Pancreas (tissue), 10 donors: ENCODE measurements at regions of chr3 and their contacts with region 1.

Region 1: GRCh38 chr3:46629551-46630517 is 17.5 kb downstream of the FAM240A start:
- DNase-seq: peak; percentile 72 to 94 (median 84)
- ATAC-seq: peak; percentile 98 to 100 (median 99)
- H3K4me3 ChIP-seq: peak overlapping the region in 1 of 4 donors; percentile 20
- H3K27ac ChIP-seq: peak overlapping the region in 2 of 4 donors; percentile 33 to 43
- H3K4me1 ChIP-seq: peaks cover 0 to 3% (median 0%) of the 10 kb centered on the region in 3 donors
- H3K27me3 ChIP-seq: no peaks in the 10 kb centered on the region
- CTCF ChIP-seq: peak; percentile 80 to 99 (median 96)

Region 2: GRCh38 chr3:46484911-46485778 is 144.7 kb before region 1 on chr3:
- intact Hi-C with region 1: loop called in 2 of 3 experiments (anchors 2 to 5 kb)
- DNase-seq: peak; percentile 88 to 96 (median 93)
- ATAC-seq: peak; percentile 83 to 90 (median 86)
- H3K4me3 ChIP-seq: peak overlapping the region in 3 of 4 donors; percentile 0 to 43 (median 42)
- H3K27ac ChIP-seq: peak overlapping the region; percentile 63 to 94 (median 84)
- H3K4me1 ChIP-seq: peaks cover 0 to 10% (median 4%) of the 10 kb centered on the region in 3 donors
- H3K27me3 ChIP-seq: no peaks in the 10 kb centered on the region
- CTCF ChIP-seq: no peak

Region 3: GRCh38 chr3:46500656-46501635 is 128.9 kb before region 1 on chr3:
- intact Hi-C with region 1: loop called in 1 of 3 experiments (anchors 10 kb)
- DNase-seq: no peak
- ATAC-seq: no peak
- H3K4me3 ChIP-seq: no peak overlapping the region
- H3K27ac ChIP-seq: no peak overlapping the region
- H3K4me1 ChIP-seq: no peaks in the 10 kb centered on the region
- H3K27me3 ChIP-seq: no peaks in the 10 kb centered on the region
- CTCF ChIP-seq: no peak

Region 4: DNA sequence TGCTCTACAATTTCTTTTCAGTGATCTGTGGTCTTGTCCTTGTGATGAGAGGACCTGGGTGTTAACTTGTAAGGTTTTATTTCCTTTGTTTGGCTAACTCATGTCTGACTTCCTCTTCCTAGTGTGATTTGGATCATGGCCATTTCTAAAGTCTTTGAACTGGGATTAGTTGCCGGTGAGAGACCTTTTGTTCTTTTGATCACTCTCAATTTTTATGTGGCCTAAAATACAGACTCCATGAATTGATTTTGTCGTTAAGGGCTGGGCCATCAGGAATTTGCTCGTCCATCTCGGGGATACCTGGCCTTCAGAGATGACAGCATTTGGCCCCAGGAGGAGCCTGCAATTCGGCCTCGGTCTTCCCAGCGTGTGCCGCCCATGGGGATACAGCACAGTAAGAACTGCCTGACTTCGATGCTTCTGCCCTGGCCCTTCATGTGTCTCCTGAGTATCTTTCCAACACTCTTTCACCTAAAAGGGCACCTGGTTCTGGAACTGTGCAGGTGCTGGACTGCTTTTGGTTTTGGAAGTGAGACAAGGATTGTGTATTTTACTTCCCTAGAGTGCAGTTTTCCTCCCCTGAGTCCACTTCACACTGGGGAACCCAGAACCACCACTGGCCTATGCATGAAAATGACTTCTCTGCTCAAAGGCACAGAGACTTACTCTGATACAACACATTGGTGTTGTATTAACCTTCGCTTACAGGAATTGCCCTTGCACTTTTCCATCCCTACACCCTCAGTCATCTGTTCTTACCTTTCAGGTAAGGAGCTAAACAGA is 50.7 kb before region 1 on chr3:
- intact Hi-C with region 1: no loop called
- DNase-seq: no peak
- ATAC-seq: peak in 3 of 4 donors; percentile 36 to 59 (median 52)
- H3K4me3 ChIP-seq: no peak overlapping the region
- H3K27ac ChIP-seq: peak overlapping the region in 1 of 4 donors; percentile 7
- H3K4me1 ChIP-seq: peaks cover 6 to 12% (median 11%) of the 10 kb centered on the region in 3 donors
- H3K27me3 ChIP-seq: no peaks in the 10 kb centered on the region
- CTCF ChIP-seq: no peak

Region 5: GRCh38 chr3:46733026-46733800 is 103.4 kb after region 1 on chr3:
- intact Hi-C with region 1: no loop called
- DNase-seq: peak in 1 of 6 donors; percentile 17
- ATAC-seq: no peak
- H3K4me3 ChIP-seq: no peak overlapping the region
- H3K27ac ChIP-seq: no peak overlapping the region
- H3K4me1 ChIP-seq: peaks cover 0 to 7% (median 4%) of the 10 kb centered on the region in 3 donors
- H3K27me3 ChIP-seq: no peaks in the 10 kb centered on the region
- CTCF ChIP-seq: no peak